ENCODE measurements at regions of chr11 and their contacts with region 1.

Region 1: GRCh38 chr11:64448599-64449556 is 89.9 kb downstream of the RPS6KA4 start:
- DNase-seq: peak; percentile 84
- H3K4me3 Mint-ChIP-seq: peak overlapping the region; percentile 57
- H3K27ac Mint-ChIP-seq: no peak overlapping the region
- H3K4me1 Mint-ChIP-seq: peaks cover 13% of the 10 kb centered on the region
- H3K27me3 Mint-ChIP-seq: peaks cover 17% of the 10 kb centered on the region

Region 2: GRCh38 chr11:64036087-64037026 is 412.5 kb before region 1 on chr11:
- CTCF ChIA-PET with region 1: no interaction called
- POLR2A ChIA-PET with region 1: no interaction called
- intact Hi-C with region 1: no loop called
- DNase-seq: no peak
- H3K4me3 Mint-ChIP-seq: no peak overlapping the region
- H3K27ac Mint-ChIP-seq: no peak overlapping the region
- H3K4me1 Mint-ChIP-seq: peaks cover 6% of the 10 kb centered on the region
- H3K27me3 Mint-ChIP-seq: peaks cover 38% of the 10 kb centered on the region

Region 3: GRCh38 chr11:64406221-64406946 is 42.5 kb before region 1 on chr11:
- CTCF ChIA-PET with region 1: interaction called, 12 read pairs
- POLR2A ChIA-PET with region 1: no interaction called
- intact Hi-C with region 1: no loop called
- DNase-seq: no peak
- H3K4me3 Mint-ChIP-seq: no peak overlapping the region
- H3K27ac Mint-ChIP-seq: no peak overlapping the region
- H3K4me1 Mint-ChIP-seq: no peaks in the 10 kb centered on the region
- H3K27me3 Mint-ChIP-seq: peaks cover 10% of the 10 kb centered on the region

Region 4: DNA sequence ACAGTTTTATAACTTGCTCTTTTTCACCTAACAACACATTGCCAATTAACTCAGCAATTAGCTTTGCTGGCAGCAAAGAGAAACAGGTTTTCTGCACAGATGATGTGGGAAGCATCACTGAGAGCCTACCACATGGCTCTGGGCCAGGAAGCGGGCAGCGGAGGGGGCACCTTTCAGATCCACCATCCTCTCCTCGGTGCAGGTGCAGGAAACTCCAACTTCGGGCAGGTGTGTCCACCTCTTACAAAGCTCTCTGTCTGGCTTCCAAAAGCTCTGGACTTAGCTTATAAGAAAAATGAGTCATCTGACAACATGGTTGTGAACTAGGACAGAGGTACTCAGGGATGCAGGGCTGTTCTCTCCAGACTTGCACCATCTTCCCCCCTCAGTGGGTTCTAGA is 12.9 kb before region 1 on chr11:
- CTCF ChIA-PET with region 1: interaction called, 35 read pairs
- POLR2A ChIA-PET with region 1: no interaction called
- intact Hi-C with region 1: no loop called
- DNase-seq: no peak
- H3K4me3 Mint-ChIP-seq: no peak overlapping the region
- H3K27ac Mint-ChIP-seq: no peak overlapping the region
- H3K4me1 Mint-ChIP-seq: no peaks in the 10 kb centered on the region
- H3K27me3 Mint-ChIP-seq: peaks cover 7% of the 10 kb centered on the region

Region 5: GRCh38 chr11:64489831-64490441 is 41.1 kb after region 1 on chr11:
- CTCF ChIA-PET with region 1: interaction called, 39 read pairs
- POLR2A ChIA-PET with region 1: no interaction called
- intact Hi-C with region 1: no loop called
- DNase-seq: peak; percentile 63
- H3K4me3 Mint-ChIP-seq: no peak overlapping the region
- H3K27ac Mint-ChIP-seq: no peak overlapping the region
- H3K4me1 Mint-ChIP-seq: peaks cover 13% of the 10 kb centered on the region
- H3K27me3 Mint-ChIP-seq: peaks cover 32% of the 10 kb centered on the region

Region 6: GRCh38 chr11:64652586-64653387 is 203.9 kb after region 1 on chr11:
- CTCF ChIA-PET with region 1: interaction called, 19 read pairs
- POLR2A ChIA-PET with region 1: no interaction called
- intact Hi-C with region 1: no loop called
- DNase-seq: peak; percentile 83
- H3K4me3 Mint-ChIP-seq: no peak overlapping the region
- H3K27ac Mint-ChIP-seq: no peak overlapping the region
- H3K4me1 Mint-ChIP-seq: peaks cover 6% of the 10 kb centered on the region
- H3K27me3 Mint-ChIP-seq: peaks cover 3% of the 10 kb centered on the region

Measured in activated CD4-positive, alpha-beta memory T cell treated with anti-CD3 and anti-CD28 coated beads for 36 hours (primary cell).